ENCODE measurements at regions of chr15 and their contacts with region 1.

Region 1: DNA sequence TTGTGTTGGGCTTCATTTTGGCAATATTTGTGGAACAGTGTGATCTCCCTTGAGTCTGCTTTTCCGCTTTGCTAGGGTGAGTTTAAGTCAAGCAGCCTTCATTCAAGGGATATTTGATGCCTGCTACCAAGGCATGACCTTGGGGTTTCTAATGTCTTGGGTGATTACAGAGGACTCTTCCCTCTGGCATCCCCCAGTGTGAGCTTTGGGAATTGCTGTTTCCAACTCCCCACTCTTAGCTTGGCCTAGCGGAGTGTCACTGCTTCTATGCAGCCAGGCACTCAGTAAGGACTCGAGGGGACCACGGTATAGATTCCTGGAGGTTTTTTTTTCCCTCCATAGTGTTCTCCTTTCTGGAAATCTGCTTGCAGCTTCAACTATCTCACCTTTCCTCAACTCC is 21.1 kb downstream of the GCNT3 start:
- DNase-seq: no peak
- H3K4me3 ChIP-seq: no peak overlapping the region
- H3K27ac ChIP-seq: no peak overlapping the region
- H3K4me1 ChIP-seq: no peaks in the 10 kb centered on the region
- H3K27me3 ChIP-seq: no peaks in the 10 kb centered on the region
- CTCF ChIP-seq: no peak
- EP300 ChIP-seq: no peak
- POLR2A ChIP-seq: no peak

Region 2: DNA sequence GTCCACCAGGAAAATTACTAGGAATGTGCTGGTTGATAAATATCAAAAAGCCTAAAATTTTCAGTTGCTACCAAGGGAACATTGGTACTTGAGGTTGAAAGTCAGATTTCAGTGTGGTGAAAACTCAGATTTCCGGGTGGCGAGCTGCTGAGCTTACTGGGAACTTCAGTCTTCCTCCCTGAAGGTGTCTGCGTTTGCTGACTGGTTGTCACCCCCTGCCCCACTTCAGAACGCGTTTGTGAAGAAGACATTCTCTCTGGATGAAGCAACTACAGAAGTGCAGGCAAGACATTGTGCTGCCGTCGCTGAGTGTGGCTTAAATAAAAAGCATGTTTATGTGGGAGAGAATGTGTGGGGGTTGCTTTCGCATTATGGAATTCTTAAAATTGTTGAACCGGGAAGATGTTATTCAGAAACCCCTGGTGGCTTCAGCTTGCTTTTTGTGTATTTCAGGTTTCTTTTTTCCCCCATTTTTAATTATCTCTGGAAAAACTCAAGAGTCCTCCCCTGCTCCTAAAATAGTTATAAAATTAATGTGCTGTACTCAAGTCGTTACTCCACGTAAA is 187.7 kb before region 1 on chr15:
- intact Hi-C with region 1: no loop called
- DNase-seq: no peak
- H3K4me3 ChIP-seq: peak overlapping the region; percentile 13
- H3K27ac ChIP-seq: no peak overlapping the region
- H3K4me1 ChIP-seq: no peaks in the 10 kb centered on the region
- H3K27me3 ChIP-seq: no peaks in the 10 kb centered on the region
- CTCF ChIP-seq: no peak
- EP300 ChIP-seq: no peak
- POLR2A ChIP-seq: no peak

Region 3: GRCh38 chr15:59532770-59533379 is 99.8 kb before region 1 on chr15:
- intact Hi-C with region 1: loop called in 2 of 4 experiments (anchors 5 to 10 kb)
- DNase-seq: peak in 3 of 5 donors; percentile 24 to 36 (median 31)
- H3K4me3 ChIP-seq: no peak overlapping the region
- H3K27ac ChIP-seq: no peak overlapping the region
- H3K4me1 ChIP-seq: no peaks in the 10 kb centered on the region
- H3K27me3 ChIP-seq: no peaks in the 10 kb centered on the region
- CTCF ChIP-seq: peak; percentile 40 to 62 (median 41)
- EP300 ChIP-seq: no peak
- POLR2A ChIP-seq: no peak

Region 4: DNA sequence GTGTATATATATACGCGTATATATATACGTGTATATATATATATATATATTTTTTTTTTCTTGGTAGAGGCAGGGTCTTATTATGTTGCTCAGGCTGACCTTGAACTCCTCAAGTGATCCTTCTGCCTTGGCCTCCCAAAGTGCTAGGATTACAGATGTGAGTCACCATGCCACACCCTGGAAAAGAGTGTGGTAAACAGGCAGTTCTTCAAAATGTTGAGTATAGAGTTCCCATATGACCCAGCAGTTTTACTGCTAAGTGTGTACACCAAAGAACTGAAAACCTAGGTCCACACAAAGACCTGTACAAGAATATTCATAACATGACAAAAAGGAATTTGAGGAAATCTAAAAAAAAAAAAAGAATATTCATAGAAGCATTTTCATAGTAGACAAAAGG is 92.9 kb before region 1 on chr15:
- intact Hi-C with region 1: loop called in 2 of 4 experiments (anchors 5 to 10 kb)
- DNase-seq: no peak
- H3K4me3 ChIP-seq: no peak overlapping the region
- H3K27ac ChIP-seq: no peak overlapping the region
- H3K4me1 ChIP-seq: no peaks in the 10 kb centered on the region
- H3K27me3 ChIP-seq: no peaks in the 10 kb centered on the region
- CTCF ChIP-seq: no peak
- EP300 ChIP-seq: no peak
- POLR2A ChIP-seq: no peak

Measured in ovary (tissue), 10 donors.